ENCODE measurements at regions of chr17 and their contacts with region 1.

Region 1: GRCh38 chr17:77494664-77495435 is 354.1 kb downstream of the SEC14L1 start:
- DNase-seq: peak; percentile 80
- H3K4me3 ChIP-seq: no peak overlapping the region
- H3K27ac ChIP-seq: no peak overlapping the region
- H3K4me1 ChIP-seq: no peaks in the 10 kb centered on the region
- H3K27me3 ChIP-seq: no peaks in the 10 kb centered on the region
- CTCF ChIP-seq: peak; percentile 94

Region 2: DNA sequence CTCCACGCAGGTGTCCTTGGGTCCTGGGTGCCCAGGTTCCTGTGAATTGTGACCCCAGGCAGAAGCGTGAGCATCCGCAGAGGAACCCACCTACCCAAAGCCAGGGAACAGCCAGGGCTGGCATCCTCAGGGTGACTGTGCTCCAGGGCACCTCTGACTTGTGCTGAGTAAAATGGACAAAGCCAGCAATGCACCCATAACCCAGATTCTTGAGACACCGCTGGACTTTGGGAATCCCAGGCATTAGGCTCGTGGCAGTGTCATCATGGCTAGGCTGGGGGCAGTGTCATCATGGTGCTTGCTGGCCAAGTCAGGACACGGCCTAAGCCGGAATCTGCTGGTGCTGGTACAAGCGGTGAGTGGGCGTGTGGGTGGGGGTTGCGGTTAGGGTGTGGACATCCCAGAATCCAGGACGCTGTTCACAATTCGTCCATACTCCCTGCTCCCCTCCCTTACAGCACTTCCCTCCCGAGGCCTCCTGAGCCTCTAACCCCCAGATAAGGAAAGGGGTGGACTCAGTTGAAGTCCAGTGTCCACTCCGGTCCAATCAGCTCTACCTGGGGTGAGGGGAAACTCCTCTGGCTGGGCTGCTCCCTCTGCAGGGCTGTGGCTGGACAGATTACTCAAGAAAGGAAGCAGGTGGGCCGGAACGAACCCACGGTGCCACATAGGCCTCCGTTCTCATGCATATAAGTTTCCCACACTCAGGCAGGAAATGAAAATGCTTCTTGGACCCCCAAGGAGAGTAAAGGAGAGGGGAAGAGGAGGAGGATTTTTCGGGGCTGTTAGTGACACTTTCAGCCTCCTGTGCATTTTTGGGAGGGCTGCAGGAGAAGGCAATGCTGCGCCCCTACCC is 215.2 kb before region 1 on chr17:
- intact Hi-C with region 1: loop called (anchors 10 kb)
- DNase-seq: peak; percentile 52
- H3K4me3 ChIP-seq: peak overlapping the region; percentile 73
- H3K27ac ChIP-seq: peak overlapping the region; percentile 70
- H3K4me1 ChIP-seq: no peaks in the 10 kb centered on the region
- H3K27me3 ChIP-seq: no peaks in the 10 kb centered on the region
- CTCF ChIP-seq: no peak

Region 3: DNA sequence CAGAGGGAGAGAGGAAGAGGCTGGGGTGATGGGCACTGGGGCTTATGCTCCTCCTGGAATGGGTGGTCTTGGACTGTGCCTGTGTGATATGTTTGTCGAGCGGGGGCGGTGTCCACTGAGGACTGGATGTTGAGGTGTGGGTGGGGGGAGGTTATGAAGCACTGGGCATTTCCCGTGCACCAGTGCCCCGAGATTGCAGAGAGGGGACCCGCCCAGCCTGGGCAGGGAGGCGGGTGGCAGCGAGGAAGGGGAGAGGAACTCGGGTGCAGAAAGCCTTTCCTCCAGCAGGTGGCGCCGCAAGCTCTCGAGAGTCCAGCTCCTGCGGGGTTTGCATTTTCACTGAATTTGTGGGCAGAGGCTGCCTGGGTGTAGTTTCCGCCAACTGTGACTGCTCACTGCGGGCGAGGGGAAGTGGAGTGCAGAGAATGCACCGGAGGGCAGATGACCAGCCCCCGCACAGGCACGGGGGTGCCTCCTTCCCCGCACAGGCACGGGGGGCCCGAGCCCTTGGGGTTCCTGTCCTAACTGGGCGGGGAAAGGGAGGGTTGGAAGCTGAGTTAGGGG is 163.5 kb before region 1 on chr17:
- intact Hi-C with region 1: loop called (anchors 1 kb)
- DNase-seq: peak; percentile 97
- H3K4me3 ChIP-seq: no peak overlapping the region
- H3K27ac ChIP-seq: no peak overlapping the region
- H3K4me1 ChIP-seq: peaks cover 19% of the 10 kb centered on the region
- H3K27me3 ChIP-seq: no peaks in the 10 kb centered on the region
- CTCF ChIP-seq: peak; percentile 94

Region 4: GRCh38 chr17:77391668-77392375 is 103.0 kb before region 1 on chr17:
- intact Hi-C with region 1: no loop called
- DNase-seq: peak; percentile 65
- H3K4me3 ChIP-seq: no peak overlapping the region
- H3K27ac ChIP-seq: peak overlapping the region; percentile 73
- H3K4me1 ChIP-seq: peaks cover 39% of the 10 kb centered on the region
- H3K27me3 ChIP-seq: no peaks in the 10 kb centered on the region
- CTCF ChIP-seq: no peak

Region 5: GRCh38 chr17:77429919-77430752 is 64.7 kb before region 1 on chr17:
- intact Hi-C with region 1: loop called (anchors 2 kb)
- DNase-seq: peak; percentile 91
- H3K4me3 ChIP-seq: no peak overlapping the region
- H3K27ac ChIP-seq: peak overlapping the region; percentile 56
- H3K4me1 ChIP-seq: peaks cover 37% of the 10 kb centered on the region
- H3K27me3 ChIP-seq: no peaks in the 10 kb centered on the region
- CTCF ChIP-seq: peak; percentile 72

Measured in colonic mucosa (tissue), 4 donors.